AG04450 (cell line): ENCODE measurements at regions of chr5 and their contacts with region 1.

Region 1: GRCh38 chr5:177351385-177352329 is at the start of gene LMAN2:
- DNase-seq: peak; percentile 91
- H3K4me3 ChIP-seq: peak within 1 kb of the TSS; percentile 100
- H3K27ac ChIP-seq: peak within 1 kb of the TSS; percentile 98
- H3K27me3 ChIP-seq: peaks cover 2% of the 10 kb centered on the region
- CTCF ChIP-seq: no peak
- polyA plus RNA-seq, gene LMAN2: 150 and 212 TPM in 2 replicates

Region 2: GRCh38 chr5:177317959-177318377 is 33.7 kb before region 1 on chr5:
- CTCF ChIA-PET with region 1: interaction called, 10 read pairs
- POLR2A ChIA-PET with region 1: interaction called, 6 read pairs
- DNase-seq: peak; percentile 63
- H3K4me3 ChIP-seq: no peak overlapping the region
- H3K27ac ChIP-seq: no peak overlapping the region
- H3K27me3 ChIP-seq: no peaks in the 10 kb centered on the region
- CTCF ChIP-seq: peak; percentile 93